Posterior cingulate gyrus (tissue), 11 donors: ENCODE measurements at regions of chr6 and their contacts with region 1.

Region 1: GRCh38 chr6:63635588-63636517 is at the start of gene PHF3:
- DNase-seq: peak; percentile 84 to 98 (median 91)

Region 2: DNA sequence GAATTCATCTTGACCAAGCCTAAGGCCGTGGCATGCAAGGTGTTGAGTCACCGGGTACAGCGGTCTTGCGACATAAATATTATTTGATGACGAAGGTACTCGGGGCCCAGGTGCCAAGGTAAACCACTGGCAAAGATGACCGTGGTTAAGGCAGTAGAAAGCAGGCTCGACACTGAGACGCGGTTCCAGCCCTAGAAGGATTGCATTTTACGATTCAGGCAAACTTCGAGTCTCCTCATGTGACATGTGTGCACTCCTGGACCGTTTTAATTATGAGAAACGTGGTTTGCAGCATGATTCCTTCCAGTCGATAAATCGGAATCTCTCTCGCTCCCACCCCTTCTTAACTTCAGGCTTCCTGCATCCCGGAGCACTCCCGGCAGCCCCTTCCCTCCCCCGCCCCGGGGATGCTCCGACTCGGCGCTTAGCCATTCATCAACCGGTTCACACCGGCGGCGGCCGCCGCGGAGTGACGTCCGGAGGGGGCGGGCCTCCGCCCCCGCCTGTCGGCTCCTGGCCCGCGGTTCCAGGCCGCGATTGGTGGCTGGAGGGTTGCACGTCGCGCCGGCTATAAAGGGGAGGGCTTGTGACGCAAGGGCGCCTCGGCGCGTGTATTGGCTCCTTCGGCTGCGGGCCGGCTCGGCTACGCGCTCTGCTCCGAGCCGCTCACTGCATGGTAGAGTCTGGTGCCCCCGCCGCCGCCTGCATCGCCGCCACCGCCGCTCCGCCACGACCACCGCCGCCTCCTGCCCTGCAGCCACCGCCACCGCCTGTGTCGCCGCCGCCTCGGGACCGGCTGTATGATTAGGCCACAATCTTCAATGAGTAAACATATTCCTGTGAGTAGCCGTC is 63.7 kb before region 1 on chr6 and contains the starts of genes LOC128125822 and PTP4A1:
- intact Hi-C with region 1: loop called (anchors 2 kb)
- DNase-seq: peak; percentile 96 to 100 (median 99)

Region 3: GRCh38 chr6:63598049-63599036 is 37.5 kb before region 1 on chr6:
- intact Hi-C with region 1: loop called (anchors 1 kb)
- DNase-seq: peak; percentile 38 to 94 (median 74)

Region 4: GRCh38 chr6:63672582-63673129 is 36.8 kb after region 1 on chr6:
- intact Hi-C with region 1: no loop called
- DNase-seq: no peak

Region 5: GRCh38 chr6:63685446-63686379 is 49.9 kb after region 1 on chr6:
- intact Hi-C with region 1: loop called (anchors 10 kb)
- DNase-seq: no peak